HAP-1 (cell line): ENCODE measurements at regions of chr3 and their contacts with region 1.

Region 1: GRCh38 chr3:159804726-159805410 is 183.8 kb upstream of the IL12A start:
- DNase-seq: peak; percentile 73 to 79
- H3K4me3 ChIP-seq: no peak overlapping the region
- H3K4me1 ChIP-seq: peaks cover 7% of the 10 kb centered on the region; the same call in 1 of the 2 replicates
- H3K27me3 ChIP-seq: no peaks in the 10 kb centered on the region

Region 2: DNA sequence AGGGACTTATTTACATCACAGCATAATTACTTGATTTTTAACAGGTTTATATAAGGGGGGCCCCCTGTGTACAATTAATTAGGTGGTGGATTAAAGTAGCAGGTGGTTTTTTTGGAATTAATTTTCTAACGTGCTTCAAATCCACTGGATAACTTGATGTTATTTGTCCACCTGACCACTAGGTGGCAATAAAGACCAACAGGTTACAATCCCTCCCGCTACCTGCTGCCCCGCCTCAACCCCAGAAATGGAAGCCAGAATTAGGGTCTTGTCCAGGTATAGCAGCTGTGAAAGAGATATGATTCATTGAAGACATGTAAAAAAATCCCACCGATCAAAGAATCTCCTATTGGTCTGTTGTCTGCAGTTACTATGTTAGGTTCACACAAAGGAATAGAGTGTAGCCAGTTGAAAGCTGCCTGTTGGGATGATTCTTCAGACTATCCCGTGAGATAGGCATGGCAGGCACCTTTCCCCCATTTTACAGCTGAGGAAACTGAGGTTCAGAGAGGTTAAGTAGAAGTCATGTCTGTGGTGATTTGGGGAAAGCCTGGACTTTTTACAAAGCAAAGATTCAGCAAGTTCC is 959.0 kb before region 1 on chr3:
- in situ Hi-C with region 1: loop called (anchors 25 kb)
- DNase-seq: peak; percentile 52 to 59
- H3K4me3 ChIP-seq: no peak overlapping the region
- H3K4me1 ChIP-seq: no peaks in the 10 kb centered on the region
- H3K27me3 ChIP-seq: no peaks in the 10 kb centered on the region

Region 3: DNA sequence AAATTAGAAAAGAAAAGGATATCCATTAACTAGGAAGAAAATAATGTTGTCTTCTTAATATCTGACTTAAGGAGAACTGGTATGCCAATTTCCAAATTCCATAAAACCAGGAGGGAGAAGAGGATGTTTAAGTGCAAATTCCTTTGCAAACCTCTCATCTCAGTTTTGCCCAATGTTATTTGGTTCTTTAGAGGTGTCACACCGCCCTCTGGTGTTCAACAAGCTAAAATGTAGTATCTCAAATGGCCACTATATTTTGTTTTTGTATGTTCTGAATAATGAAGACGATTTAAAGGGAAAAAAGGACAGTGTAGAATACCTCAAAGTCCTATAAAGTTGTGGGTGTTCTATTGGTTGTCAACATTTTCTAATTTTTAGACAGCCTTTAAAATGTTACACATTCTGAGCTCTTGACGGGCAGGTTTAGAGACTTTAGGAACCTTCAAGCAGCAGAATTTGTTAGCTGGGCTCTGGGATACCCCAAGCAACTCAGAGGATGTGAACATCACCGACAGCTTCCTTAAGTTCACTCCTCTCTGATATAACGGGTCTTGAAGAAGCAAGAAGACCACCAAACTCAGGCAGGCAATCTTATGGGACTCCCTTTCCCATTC is 544.7 kb before region 1 on chr3:
- in situ Hi-C with region 1: loop called (anchors 10 kb)
- DNase-seq: peak; percentile 51 to 67
- H3K4me3 ChIP-seq: no peak overlapping the region
- H3K4me1 ChIP-seq: no peaks in the 10 kb centered on the region
- H3K27me3 ChIP-seq: no peaks in the 10 kb centered on the region

Region 4: GRCh38 chr3:159616212-159616825 is 188.5 kb before region 1 on chr3:
- in situ Hi-C with region 1: loop called (anchors 10 kb)
- DNase-seq: peak; percentile 56 to 67
- H3K4me3 ChIP-seq: no peak overlapping the region
- H3K4me1 ChIP-seq: peaks cover 25% of the 10 kb centered on the region
- H3K27me3 ChIP-seq: peaks cover 3% of the 10 kb centered on the region; the same call in 1 of the 2 replicates

Region 5: GRCh38 chr3:160115387-160115786 is 310.5 kb after region 1 on chr3:
- in situ Hi-C with region 1: no loop called
- DNase-seq: no peak
- H3K4me3 ChIP-seq: no peak overlapping the region
- H3K4me1 ChIP-seq: peaks cover 7% of the 10 kb centered on the region
- H3K27me3 ChIP-seq: no peaks in the 10 kb centered on the region